Left ventricle myocardium superior (tissue), 1 donor: ENCODE measurements at regions of chr1 and their contacts with region 1.

Region 1: GRCh38 chr1:214328770-214329469 is 48.0 kb downstream of the SMYD2 start:
- DNase-seq: peak; percentile 85
- ATAC-seq: peak; percentile 84

Region 2: GRCh38 chr1:214213136-214213535 is 115.8 kb before region 1 on chr1:
- intact Hi-C with region 1: loop called (anchors 5 kb)
- DNase-seq: no peak
- ATAC-seq: no peak

Region 3: GRCh38 chr1:214261206-214262123 is 67.5 kb before region 1 on chr1:
- intact Hi-C with region 1: loop called (anchors 5 kb)
- DNase-seq: peak; percentile 90
- ATAC-seq: peak; percentile 97

Region 4: GRCh38 chr1:214584805-214585766 is 256.2 kb after region 1 on chr1:
- intact Hi-C with region 1: loop called (anchors 5 kb)
- DNase-seq: no peak
- ATAC-seq: peak; percentile 79